ENCODE measurements at regions of chr6 and their contacts with region 1.

Region 1: DNA sequence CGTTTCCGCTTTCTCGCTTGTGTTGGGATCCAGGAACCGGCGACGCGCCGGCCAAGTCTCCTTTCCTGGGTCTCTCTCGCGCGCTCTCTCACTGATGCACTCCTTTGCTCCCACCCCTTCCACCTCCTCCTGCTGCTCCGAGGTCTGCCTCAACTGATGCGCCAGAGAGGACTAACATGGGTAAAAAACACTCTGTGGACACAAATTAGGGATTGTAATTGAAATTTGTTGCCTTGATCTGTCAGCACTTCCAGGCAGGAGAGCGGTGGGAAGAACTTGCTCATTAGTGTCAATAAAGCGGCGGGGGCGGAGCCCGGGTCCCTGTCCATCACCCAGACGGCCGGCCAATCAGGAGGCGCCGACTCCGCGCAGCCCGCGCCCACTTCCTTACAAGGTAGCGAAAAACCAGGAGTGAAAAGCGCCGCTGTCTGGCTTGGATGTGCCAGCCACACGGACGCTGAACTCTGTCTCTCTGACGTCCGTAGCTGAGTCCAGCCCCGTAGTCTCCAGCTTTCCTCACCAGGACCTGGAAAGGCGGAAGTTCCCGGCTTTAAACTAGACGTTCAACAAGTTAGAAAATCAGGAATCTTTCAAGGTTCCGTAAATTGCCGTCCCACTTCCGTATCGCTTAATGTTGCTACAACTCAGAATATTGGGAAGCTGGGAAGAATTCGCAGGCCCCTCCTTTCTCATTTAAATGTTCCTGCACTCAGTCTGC is at the start of gene TBX18:
- DNase-seq: peak; percentile 95
- H3K4me3 ChIP-seq: peak within 1 kb of the TSS; percentile 16 to 34 (median 21)
- H3K27ac ChIP-seq: no peak within 1 kb of the TSS
- H3K4me1 ChIP-seq: peaks cover 10% of the 10 kb centered on the region
- H3K27me3 ChIP-seq: peaks cover 80% of the 10 kb centered on the region
- CTCF ChIP-seq: no peak
- total RNA-seq, gene TBX18: not detected

Region 2: DNA sequence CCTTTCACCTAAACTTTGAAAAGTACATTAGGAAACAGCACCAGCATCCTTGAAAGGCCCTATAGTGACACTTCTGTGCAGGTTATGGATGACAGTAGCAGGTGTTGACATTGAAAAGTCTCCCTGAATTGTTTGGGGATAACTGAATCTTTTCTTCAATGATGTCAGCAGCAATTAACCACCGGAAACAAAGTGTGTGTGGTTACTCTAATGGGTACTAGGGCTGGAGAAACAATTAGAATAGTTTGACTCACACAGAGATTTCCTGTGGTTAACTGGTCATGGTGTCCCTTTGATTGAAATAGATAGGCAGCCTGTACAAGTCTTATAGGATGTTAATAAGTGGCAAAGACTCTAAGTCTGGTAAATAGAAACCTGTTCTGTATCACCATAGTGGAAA is 189.2 kb before region 1 on chr6:
- CTCF ChIA-PET with region 1: no interaction called
- dilution Hi-C with region 1: no loop called
- in situ Hi-C with region 1: no loop called
- intact Hi-C with region 1: loop called (anchors 10 kb)
- DNase-seq: peak; percentile 80
- H3K4me3 ChIP-seq: no peak overlapping the region
- H3K27ac ChIP-seq: no peak overlapping the region
- H3K4me1 ChIP-seq: no peaks in the 10 kb centered on the region
- H3K27me3 ChIP-seq: no peaks in the 10 kb centered on the region
- CTCF ChIP-seq: no peak

Region 3: GRCh38 chr6:84785671-84786070 is 21.2 kb after region 1 on chr6:
- CTCF ChIA-PET with region 1: no interaction called
- dilution Hi-C with region 1: no loop called
- in situ Hi-C with region 1: no loop called
- intact Hi-C with region 1: no loop called
- DNase-seq: no peak
- H3K4me3 ChIP-seq: no peak overlapping the region
- H3K27ac ChIP-seq: no peak overlapping the region
- H3K4me1 ChIP-seq: no peaks in the 10 kb centered on the region
- H3K27me3 ChIP-seq: peaks cover 14% of the 10 kb centered on the region
- CTCF ChIP-seq: no peak

Region 4: DNA sequence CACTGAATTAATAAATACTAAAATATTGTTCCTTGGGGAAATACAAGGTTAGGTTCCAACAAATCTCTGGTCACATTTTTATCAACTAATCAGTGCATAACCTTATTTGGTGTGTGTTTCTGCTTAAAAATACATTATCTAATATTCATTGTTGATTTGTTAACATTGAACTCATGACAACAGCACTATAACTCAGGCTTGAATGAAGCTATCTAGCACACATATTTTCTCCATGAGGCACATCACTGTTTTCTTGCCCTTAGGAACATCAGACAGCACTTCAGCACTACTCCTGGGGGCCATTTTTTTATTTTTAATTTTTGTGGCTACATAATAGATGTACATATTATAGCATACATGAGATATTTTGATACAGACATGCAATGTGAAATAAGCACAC is 408.2 kb after region 1 on chr6:
- CTCF ChIA-PET with region 1: no interaction called
- dilution Hi-C with region 1: no loop called
- in situ Hi-C with region 1: no loop called
- intact Hi-C with region 1: no loop called
- DNase-seq: no peak
- H3K4me3 ChIP-seq: no peak overlapping the region
- H3K27ac ChIP-seq: no peak overlapping the region
- H3K4me1 ChIP-seq: no peaks in the 10 kb centered on the region
- H3K27me3 ChIP-seq: peaks cover 5% of the 10 kb centered on the region
- CTCF ChIP-seq: no peak